Left colon (tissue), 2 donors: ENCODE measurements at regions of chr3 and their contacts with region 1.

Region 1: GRCh38 chr3:138118612-138119422 is 3.4 kb upstream of the DZIP1L start:
- DNase-seq: peak; percentile 37 to 73
- ATAC-seq: peak; percentile 85

Region 2: GRCh38 chr3:138068579-138069174 is 50.1 kb before region 1 on chr3:
- intact Hi-C with region 1: loop called in 1 of 2 experiments (anchors 5 kb)
- DNase-seq: peak; percentile 54 to 71
- ATAC-seq: peak; percentile 85